Adrenal gland (tissue), 19 donors: ENCODE measurements at regions of chr10 and their contacts with region 1.

Region 1: DNA sequence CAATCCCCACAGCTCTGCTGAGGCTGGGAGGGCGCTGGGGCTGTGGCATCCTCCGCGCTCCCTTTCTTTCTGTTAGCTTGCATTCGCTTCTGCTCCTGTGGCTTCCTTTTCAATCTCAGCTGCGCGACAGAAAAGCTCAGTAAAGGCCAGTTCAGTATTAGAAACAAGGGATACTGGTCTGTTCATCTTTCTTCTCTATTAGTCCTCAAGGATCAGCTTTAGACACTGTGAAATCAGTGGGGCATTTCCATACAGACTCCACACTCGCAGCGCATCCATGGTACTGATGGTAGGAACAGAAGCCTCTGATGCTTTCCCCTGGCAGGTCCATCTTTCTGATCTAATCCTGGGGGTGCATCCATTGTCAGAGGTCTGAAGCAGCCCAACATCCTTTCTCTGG is 163.7 kb downstream of the LYZL1 start:
- DNase-seq: no peak
- H3K4me3 ChIP-seq: no peak overlapping the region
- H3K27ac ChIP-seq: no peak overlapping the region
- H3K4me1 ChIP-seq: peaks cover 8 to 15% of the 10 kb centered on the region in 2 donors
- H3K27me3 ChIP-seq: no peaks in the 10 kb centered on the region
- CTCF ChIP-seq: no peak
- POLR2A ChIP-seq: no peak

Region 2: GRCh38 chr10:29392376-29393021 is 60.0 kb before region 1 on chr10:
- intact Hi-C with region 1: loop called in 1 of 2 experiments (anchors 5 kb)
- DNase-seq: peak in 6 of 7 donors; percentile 29 to 77 (median 56)
- H3K4me3 ChIP-seq: no peak overlapping the region
- H3K27ac ChIP-seq: no peak overlapping the region
- H3K4me1 ChIP-seq: no peaks in the 10 kb centered on the region
- H3K27me3 ChIP-seq: no peaks in the 10 kb centered on the region
- CTCF ChIP-seq: peak; percentile 44 to 76 (median 67)
- POLR2A ChIP-seq: no peak